Heart right ventricle (tissue), 16 donors: ENCODE measurements at regions of chr9 and their contacts with region 1.

Region 1: GRCh38 chr9:87678650-87679515 is 47.0 kb upstream of the CTSL start:
- DNase-seq: peak in 1 of 2 donors; percentile 67
- ATAC-seq: peak in 6 of 8 donors; percentile 31 to 54 (median 43)
- H3K4me3 ChIP-seq: no peak overlapping the region
- H3K27ac ChIP-seq: no peak overlapping the region
- H3K4me1 ChIP-seq: peaks cover 0 to 7% (median 0%) of the 10 kb centered on the region in 9 donors
- H3K27me3 ChIP-seq: no peaks in the 10 kb centered on the region
- CTCF ChIP-seq: peak; percentile 51 to 87 (median 82)

Region 2: GRCh38 chr9:86413966-86414880 is 1264.7 kb before region 1 on chr9:
- intact Hi-C with region 1: loop called in 1 of 10 experiments (anchors 10 kb)
- DNase-seq: no peak
- ATAC-seq: peak in 2 of 8 donors; percentile 49 to 67
- H3K4me3 ChIP-seq: no peak overlapping the region
- H3K27ac ChIP-seq: no peak overlapping the region
- H3K4me1 ChIP-seq: peaks cover 0 to 10% (median 0%) of the 10 kb centered on the region in 9 donors
- H3K27me3 ChIP-seq: peaks cover 0 to 12% (median under 1%) of the 10 kb centered on the region in 7 donors
- CTCF ChIP-seq: peak; percentile 56 to 84 (median 74)